T-cell (primary cell): ENCODE measurements at regions of chr3 and their contacts with region 1.

Region 1: DNA sequence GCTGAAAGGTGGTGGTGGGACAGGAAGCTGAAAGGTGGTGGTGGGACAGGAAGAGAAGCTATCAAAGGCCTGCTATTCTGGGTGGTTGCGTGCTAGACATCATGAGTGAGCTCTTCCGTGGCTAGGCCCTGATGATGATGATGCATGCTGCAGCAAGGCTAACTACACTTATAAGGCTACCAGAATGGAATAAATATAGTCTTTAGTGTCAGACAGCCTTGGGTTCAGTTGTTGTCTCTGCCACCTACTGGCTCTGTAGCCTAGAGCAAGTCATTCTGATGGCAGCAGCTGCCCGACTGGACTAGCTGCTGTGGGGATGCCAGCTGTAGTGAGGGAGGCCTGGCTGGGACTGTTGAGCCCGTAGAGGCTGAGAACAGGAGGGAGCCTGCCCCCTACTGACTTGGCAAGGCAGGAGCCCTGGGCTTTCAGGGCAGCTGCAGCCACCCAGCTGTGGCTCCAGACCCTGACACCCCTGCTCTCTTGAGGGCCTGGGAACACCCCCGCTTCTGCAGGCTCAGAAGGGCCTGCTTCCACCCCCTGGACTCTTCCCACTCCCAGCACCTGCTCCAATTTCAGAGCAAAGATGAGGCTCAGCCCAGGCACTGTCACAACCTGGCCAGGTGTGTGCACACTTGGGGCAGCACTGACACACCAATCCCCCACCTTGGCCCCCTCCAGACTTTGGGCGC is 21.4 kb upstream of the ZBED2 start:
- DNase-seq: peak; percentile 22 to 85 (median 55)
- ATAC-seq: peak; percentile 93 to 96 (median 95)
- H3K4me3 ChIP-seq: no peak overlapping the region
- H3K4me3 Mint-ChIP-seq: peak overlapping the region in 1 of 3 donors; percentile 62
- H3K27ac ChIP-seq: peak overlapping the region; percentile 83
- H3K27ac Mint-ChIP-seq: peak overlapping the region; percentile 40 to 79
- H3K4me1 ChIP-seq: peaks cover 19 to 29% of the 10 kb centered on the region in 2 experiments
- H3K4me1 Mint-ChIP-seq: peaks cover 51 to 66% (median 58%) of the 10 kb centered on the region in 3 donors
- H3K27me3 ChIP-seq: no peaks in the 10 kb centered on the region
- H3K27me3 Mint-ChIP-seq: no peaks in the 10 kb centered on the region

Region 2: GRCh38 chr3:111547631-111548030 is 68.9 kb before region 1 on chr3:
- CTCF ChIA-PET with region 1: interaction called in 1 of 2 experiments, 16 read pairs
- POLR2A ChIA-PET with region 1: interaction called, 4 to 10 read pairs
- DNase-seq: peak in 33 of 35 experiments; percentile 16 to 79 (median 57)
- ATAC-seq: peak; percentile 80 to 89 (median 84)
- H3K4me3 ChIP-seq: peak overlapping the region; percentile 40 to 59
- H3K4me3 Mint-ChIP-seq: no peak overlapping the region
- H3K27ac ChIP-seq: peak overlapping the region; percentile 95
- H3K27ac Mint-ChIP-seq: no peak overlapping the region
- H3K4me1 ChIP-seq: peaks cover 42 to 83% of the 10 kb centered on the region in 2 experiments
- H3K4me1 Mint-ChIP-seq: peaks cover 32 to 47% (median 33%) of the 10 kb centered on the region in 3 donors
- H3K27me3 ChIP-seq: no peaks in the 10 kb centered on the region
- H3K27me3 Mint-ChIP-seq: no peaks in the 10 kb centered on the region

Region 3: DNA sequence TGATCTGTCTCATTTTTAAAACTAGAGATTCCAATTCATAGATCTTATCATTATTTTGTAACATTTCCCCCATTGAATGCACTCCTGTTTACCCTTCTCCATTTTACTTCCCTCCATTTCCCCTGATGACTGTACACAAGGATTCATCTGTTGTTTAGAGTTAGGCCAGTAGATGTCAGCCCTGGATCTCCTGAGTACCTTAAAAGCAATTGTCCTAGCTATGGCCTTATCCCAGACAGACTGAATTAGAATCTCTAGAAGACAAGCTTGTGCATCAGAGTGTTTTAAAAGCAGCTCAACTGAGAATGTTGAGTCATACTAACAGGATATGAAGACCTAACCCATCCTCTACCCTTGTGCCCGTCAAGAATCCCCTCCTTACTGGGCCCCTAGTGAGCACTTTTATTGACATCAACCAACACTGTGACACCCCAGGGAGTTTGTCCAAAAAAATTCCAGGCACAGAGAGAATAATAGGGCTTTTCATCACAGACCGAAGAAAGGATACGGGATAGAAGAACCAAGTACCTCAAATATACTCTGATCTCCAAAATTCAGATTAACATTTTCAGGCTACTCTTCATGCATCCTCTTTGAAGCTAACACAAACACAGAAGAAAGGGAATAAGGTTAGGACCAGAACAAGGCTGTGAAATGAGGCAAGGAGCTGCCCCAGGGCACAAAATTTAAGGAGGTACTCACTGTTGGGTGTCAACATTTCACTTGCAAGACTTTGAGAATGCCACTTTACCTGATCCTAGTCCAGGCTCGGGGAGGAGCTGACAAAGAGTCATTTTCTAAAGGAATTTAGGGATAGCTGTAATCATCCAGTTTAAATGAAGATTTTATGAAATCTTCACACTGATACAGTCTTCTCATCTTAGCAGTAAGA is 38.5 kb before region 1 on chr3:
- CTCF ChIA-PET with region 1: interaction called in 1 of 2 experiments, 22 read pairs
- POLR2A ChIA-PET with region 1: interaction called in 1 of 2 experiments, 3 read pairs
- DNase-seq: peak in 1 of 35 experiments; percentile 58
- ATAC-seq: peak; percentile 63 to 86 (median 69)
- H3K4me3 ChIP-seq: no peak overlapping the region
- H3K4me3 Mint-ChIP-seq: no peak overlapping the region
- H3K27ac ChIP-seq: no peak overlapping the region
- H3K27ac Mint-ChIP-seq: peak overlapping the region; percentile 16 to 46
- H3K4me1 ChIP-seq: no peaks in the 10 kb centered on the region
- H3K4me1 Mint-ChIP-seq: peaks cover 59 to 73% (median 69%) of the 10 kb centered on the region in 3 donors
- H3K27me3 ChIP-seq: no peaks in the 10 kb centered on the region
- H3K27me3 Mint-ChIP-seq: no peaks in the 10 kb centered on the region

Region 4: DNA sequence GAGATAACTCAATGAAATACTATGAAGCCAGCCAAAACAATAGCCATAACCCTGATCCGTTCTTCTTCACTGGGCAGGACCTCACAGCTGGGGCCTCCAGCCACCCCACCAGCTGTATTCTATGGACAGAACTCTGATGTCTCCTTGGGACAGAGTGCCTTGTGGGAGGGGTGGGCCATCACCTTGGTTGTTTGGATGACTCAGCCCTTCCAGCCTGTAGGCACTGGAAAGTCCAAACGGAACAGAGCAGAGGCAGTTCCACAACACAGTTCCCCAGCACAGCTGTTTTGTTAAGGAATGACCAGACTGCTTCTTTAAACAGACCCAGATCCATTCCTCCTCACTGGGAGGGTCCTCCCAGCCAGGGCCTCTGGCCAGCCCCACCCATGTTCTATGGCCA is 10.5 kb after region 1 on chr3:
- CTCF ChIA-PET with region 1: no interaction called
- POLR2A ChIA-PET with region 1: no interaction called
- DNase-seq: no peak
- ATAC-seq: no peak
- H3K4me3 ChIP-seq: no peak overlapping the region
- H3K4me3 Mint-ChIP-seq: no peak overlapping the region
- H3K27ac ChIP-seq: no peak overlapping the region
- H3K27ac Mint-ChIP-seq: no peak overlapping the region
- H3K4me1 ChIP-seq: no peaks in the 10 kb centered on the region
- H3K4me1 Mint-ChIP-seq: peaks cover 5 to 17% (median 8%) of the 10 kb centered on the region in 3 donors
- H3K27me3 ChIP-seq: no peaks in the 10 kb centered on the region
- H3K27me3 Mint-ChIP-seq: no peaks in the 10 kb centered on the region